Pancreas (tissue), 10 donors: ENCODE measurements at regions of chr6 and their contacts with region 1.

Region 1: DNA sequence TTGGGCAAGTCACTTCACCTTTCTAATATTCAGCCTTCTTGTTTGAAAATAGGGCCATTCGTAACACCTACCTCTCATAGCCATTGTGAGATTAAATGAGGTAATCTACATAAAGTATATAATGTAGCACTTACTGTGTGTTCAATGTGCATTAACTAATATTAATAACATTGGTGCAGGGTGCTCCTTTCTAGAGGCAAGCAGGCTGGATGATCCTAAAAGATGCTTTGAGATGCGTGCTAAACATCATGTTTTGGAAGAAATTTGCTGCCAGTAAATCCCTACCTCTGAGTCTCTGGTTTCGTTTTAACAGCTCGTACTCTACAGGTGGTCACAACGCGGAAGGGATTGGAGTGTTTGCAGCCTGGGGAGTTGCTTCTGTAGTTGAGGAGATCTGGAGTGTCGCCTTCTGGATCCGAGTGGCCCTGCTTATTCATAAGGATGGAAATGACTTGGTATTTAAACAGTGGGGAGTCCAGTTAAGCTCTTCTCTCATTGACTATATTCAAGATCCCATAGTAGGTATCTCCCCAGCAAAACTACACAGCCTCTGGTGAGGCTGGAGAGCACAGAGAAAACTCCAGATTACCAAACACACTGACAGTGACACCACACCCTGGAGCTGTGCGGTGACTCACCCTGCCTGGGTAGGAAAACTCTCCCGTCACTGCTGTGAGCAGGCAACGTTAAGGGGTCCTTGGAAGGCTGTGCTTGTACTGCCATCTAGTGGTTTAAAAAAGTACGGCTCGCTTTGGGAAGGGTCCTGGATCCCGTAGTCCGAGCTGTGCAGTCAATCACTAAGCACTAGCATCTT is 107.9 kb downstream of the MAP3K7 start:
- DNase-seq: peak; percentile 69 to 87 (median 78)
- ATAC-seq: peak; percentile 100
- H3K4me3 ChIP-seq: no peak overlapping the region
- H3K27ac ChIP-seq: no peak overlapping the region
- H3K4me1 ChIP-seq: no peaks in the 10 kb centered on the region
- H3K27me3 ChIP-seq: no peaks in the 10 kb centered on the region
- CTCF ChIP-seq: peak; percentile 85 to 95 (median 90)

Region 2: DNA sequence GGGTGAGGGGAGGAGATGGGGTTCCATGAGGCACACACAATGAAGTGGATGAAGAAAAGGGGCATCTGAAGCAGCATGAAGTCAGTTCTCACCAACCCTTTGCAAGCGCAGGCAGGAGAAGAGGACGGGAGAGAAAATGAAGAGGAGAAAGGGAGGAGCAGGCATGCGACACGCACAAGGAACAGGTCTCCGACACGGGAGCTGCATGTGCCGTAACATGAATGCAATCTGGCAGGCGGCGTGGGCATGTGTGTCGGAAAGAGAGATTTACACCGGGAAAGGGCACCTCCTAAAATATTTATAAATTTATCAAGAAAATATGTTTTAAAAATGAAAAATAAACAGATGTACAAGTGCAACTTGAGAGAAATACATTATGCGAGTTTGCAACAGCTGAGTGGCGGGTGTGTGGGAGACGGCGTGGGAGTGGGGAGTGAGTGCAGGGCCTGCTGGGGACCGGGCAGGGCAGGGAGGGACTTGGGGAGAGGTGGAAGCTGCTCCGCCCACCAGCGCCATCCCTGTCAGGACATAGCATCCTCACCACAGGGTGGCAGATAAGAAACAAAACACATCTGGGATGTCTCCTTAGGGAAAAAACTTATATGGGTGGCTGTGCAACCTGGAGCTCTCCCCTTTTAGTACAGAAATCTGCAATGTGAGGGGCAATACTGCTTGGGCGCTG is 544.2 kb before region 1 on chr6:
- intact Hi-C with region 1: loop called in 2 of 3 experiments (anchors 5 to 10 kb)
- DNase-seq: no peak
- ATAC-seq: no peak
- H3K4me3 ChIP-seq: no peak overlapping the region
- H3K27ac ChIP-seq: no peak overlapping the region
- H3K4me1 ChIP-seq: peaks cover 0 to 3% (median 0%) of the 10 kb centered on the region in 3 donors
- H3K27me3 ChIP-seq: no peaks in the 10 kb centered on the region
- CTCF ChIP-seq: no peak

Region 3: DNA sequence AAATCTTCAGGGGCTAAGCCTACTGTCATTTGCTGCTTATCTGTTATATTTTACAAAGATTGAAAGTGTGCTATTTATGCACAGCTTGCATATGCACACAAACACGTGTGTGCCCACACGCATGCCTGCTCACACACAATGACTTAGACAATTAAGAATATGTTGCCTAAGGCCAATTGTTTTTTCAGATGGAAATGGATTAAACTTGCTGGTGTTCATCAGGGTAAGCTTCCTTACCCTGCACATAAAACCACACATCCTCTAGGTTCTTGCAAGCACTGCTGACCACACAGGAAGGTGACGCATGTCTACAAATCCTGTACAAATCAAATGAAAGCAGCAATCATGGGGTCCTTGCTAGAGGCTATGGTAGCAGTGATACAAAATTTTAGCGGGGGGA is 526.3 kb before region 1 on chr6:
- intact Hi-C with region 1: loop called in 1 of 3 experiments (anchors 10 kb)
- DNase-seq: no peak
- ATAC-seq: no peak
- H3K4me3 ChIP-seq: no peak overlapping the region
- H3K27ac ChIP-seq: no peak overlapping the region
- H3K4me1 ChIP-seq: no peaks in the 10 kb centered on the region
- H3K27me3 ChIP-seq: no peaks in the 10 kb centered on the region
- CTCF ChIP-seq: no peak

Region 4: GRCh38 chr6:90559931-90560330 is 80.9 kb after region 1 on chr6:
- intact Hi-C with region 1: no loop called
- DNase-seq: no peak
- ATAC-seq: no peak
- H3K4me3 ChIP-seq: no peak overlapping the region
- H3K27ac ChIP-seq: no peak overlapping the region
- H3K4me1 ChIP-seq: no peaks in the 10 kb centered on the region
- H3K27me3 ChIP-seq: no peaks in the 10 kb centered on the region
- CTCF ChIP-seq: no peak